ENCODE measurements at regions of chr4 and their contacts with region 1.

Region 1: DNA sequence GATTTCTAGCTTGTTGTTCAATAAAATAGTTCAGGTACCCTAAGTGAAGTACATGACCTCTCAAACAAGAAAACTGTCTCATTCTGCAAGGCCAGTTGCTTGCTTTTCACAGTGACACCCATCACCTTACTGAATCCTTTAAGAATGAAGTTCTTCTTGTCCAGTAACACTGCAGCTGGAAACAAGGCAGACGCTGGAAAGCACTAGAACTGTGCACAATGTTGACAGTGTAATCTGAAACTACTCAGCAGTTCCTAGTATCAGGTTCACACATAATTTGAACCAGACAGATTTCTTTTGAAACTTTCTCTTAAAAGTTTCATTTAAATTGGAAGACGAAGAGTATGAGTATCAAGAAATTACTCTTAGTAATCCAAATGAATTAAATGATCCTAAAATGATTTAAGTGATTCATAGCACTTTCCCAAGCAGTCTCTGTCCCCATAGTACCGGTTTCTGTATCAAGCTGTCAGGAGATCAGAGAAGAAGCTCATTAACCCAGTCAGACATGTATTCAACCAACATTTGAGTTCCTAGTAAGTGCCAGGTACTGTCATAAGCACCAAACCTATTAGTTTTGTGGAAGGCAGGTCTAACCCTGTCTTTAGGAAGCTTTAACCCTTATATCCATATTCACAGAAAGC is 63.5 kb downstream of the PALLD start:
- DNase-seq: peak; percentile 58 to 86
- H3K4me3 ChIP-seq: no peak overlapping the region
- H3K27ac ChIP-seq: peak overlapping the region; percentile 80
- H3K4me1 ChIP-seq: peaks cover 47% of the 10 kb centered on the region
- H3K27me3 ChIP-seq: no peaks in the 10 kb centered on the region
- CTCF ChIP-seq: no peak

Region 2: DNA sequence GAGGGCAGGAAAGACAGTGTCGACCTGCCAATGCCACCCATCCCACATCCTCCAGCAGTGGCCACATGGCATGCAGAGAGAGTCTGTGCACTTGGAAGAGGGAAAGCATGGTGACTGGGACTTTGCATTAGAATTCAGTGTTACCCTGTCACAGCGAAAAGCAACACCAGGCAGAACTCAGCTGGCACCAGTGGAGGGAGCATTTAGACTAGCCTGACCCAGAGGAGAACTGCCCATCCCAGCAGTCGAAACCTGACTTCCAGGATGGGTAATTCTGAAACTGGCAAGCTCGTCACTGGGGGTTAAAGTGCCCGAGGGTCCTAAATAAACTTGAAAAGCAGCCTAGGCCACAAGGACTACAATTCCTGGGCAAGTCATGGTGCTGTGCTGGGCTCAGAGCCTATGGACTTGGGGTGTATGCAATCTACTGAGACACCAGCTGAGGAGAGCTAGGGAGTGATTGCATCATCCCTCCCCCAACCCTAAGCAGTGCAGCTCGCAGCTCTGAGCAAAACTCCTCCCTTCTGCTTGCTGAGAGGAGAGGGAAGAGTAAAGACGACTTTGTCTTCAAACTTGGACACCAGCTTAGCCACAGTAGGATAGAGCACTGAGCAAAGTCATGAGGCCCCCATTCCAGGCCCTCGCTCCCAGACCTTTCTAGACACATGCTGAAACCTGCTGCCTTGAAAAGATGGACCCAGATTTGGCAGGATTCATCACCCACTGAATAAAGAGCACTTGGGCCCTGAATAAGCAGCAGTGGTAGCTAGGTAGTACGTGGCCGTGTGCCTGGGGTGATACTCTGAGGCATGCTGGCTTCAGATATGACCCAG is 148.8 kb before region 1 on chr4:
- CTCF ChIA-PET with region 1: no interaction called
- POLR2A ChIA-PET with region 1: no interaction called
- intact Hi-C with region 1: no loop called
- DNase-seq: no peak
- H3K4me3 ChIP-seq: no peak overlapping the region
- H3K27ac ChIP-seq: no peak overlapping the region
- H3K4me1 ChIP-seq: 0 out of 2 replicates have a peak, but pooled peaks cover 7% of the 10 kb centered on the region
- H3K27me3 ChIP-seq: no peaks in the 10 kb centered on the region
- CTCF ChIP-seq: no peak

Region 3: GRCh38 chr4:168421671-168422070 is 138.6 kb before region 1 on chr4:
- CTCF ChIA-PET with region 1: no interaction called
- POLR2A ChIA-PET with region 1: no interaction called
- intact Hi-C with region 1: no loop called
- DNase-seq: peak; percentile 44 to 52
- H3K4me3 ChIP-seq: no peak overlapping the region
- H3K27ac ChIP-seq: no peak overlapping the region
- H3K4me1 ChIP-seq: peaks cover 14% of the 10 kb centered on the region
- H3K27me3 ChIP-seq: no peaks in the 10 kb centered on the region
- CTCF ChIP-seq: no peak

Region 4: DNA sequence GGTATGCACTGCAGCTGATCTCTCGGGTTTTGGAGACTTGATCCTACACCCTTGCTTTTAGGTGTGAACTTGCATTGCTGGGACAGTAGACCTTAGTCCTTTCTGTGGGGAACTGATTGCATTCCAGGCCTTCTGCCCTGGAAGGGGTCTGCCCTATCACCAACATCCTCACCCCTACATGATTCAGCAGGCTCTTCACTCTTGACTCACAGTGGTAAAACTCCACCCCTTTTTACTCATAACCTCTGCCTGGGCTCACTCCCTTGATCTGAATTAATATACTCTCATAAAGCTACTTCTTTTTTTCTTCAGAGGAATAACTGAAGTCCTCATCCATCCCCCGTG is 73.4 kb before region 1 on chr4:
- CTCF ChIA-PET with region 1: no interaction called
- POLR2A ChIA-PET with region 1: interaction called, 7 read pairs
- intact Hi-C with region 1: loop called (anchors 2 kb)
- DNase-seq: peak in 1 of 2 experiments; percentile 78
- H3K4me3 ChIP-seq: peak overlapping the region; percentile 23; the same call in 1 of the 2 replicates
- H3K27ac ChIP-seq: peak overlapping the region; percentile 92
- H3K4me1 ChIP-seq: peaks cover 55% of the 10 kb centered on the region
- H3K27me3 ChIP-seq: no peaks in the 10 kb centered on the region
- CTCF ChIP-seq: no peak

Region 5: GRCh38 chr4:168514249-168514852 is 46.0 kb before region 1 on chr4:
- CTCF ChIA-PET with region 1: no interaction called
- POLR2A ChIA-PET with region 1: interaction called, 3 read pairs
- intact Hi-C with region 1: loop called (anchors 1 kb)
- DNase-seq: peak in 1 of 2 experiments; percentile 43
- H3K4me3 ChIP-seq: no peak overlapping the region
- H3K27ac ChIP-seq: no peak overlapping the region
- H3K4me1 ChIP-seq: no peaks in the 10 kb centered on the region
- H3K27me3 ChIP-seq: no peaks in the 10 kb centered on the region
- CTCF ChIP-seq: peak; percentile 67

Region 6: GRCh38 chr4:168540086-168540865 is 20.0 kb before region 1 on chr4:
- CTCF ChIA-PET with region 1: no interaction called
- POLR2A ChIA-PET with region 1: interaction called, 4 read pairs
- intact Hi-C with region 1: loop called (anchors 2 kb)
- DNase-seq: no peak
- H3K4me3 ChIP-seq: no peak overlapping the region
- H3K27ac ChIP-seq: no peak overlapping the region
- H3K4me1 ChIP-seq: peaks cover 14% of the 10 kb centered on the region; the same call in 1 of the 2 replicates
- H3K27me3 ChIP-seq: no peaks in the 10 kb centered on the region
- CTCF ChIP-seq: no peak

Region 7: DNA sequence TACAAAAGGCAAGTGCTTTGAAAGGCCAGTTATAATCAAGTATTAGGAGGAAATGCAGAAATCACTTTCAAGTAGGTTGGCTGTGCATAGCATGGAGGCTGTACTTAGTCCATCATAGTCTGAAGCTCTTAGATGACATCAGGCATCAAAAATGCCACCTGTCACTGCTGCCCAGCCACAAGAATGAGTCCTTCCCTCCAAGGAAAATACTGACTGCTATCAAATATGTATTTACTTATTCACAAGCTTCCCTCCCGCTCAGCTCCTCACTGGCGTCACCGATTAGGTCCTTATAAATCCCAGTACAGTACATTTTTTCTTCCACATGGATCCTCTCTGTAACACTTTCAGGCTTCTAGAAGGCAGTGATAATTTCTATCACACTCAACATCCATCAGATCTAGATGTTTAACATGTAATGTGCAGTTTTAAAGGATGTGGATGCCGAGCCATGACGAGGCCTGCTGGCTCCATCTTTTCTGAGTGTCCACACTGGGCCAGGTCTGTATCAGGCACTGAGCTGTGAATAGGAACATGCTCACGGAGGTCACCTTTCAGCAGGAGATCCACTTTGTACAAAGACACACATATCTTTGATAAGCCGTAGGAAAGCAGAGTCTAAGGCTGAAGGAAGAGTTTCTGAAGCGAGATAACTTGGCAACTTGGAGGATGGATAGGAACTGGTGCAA is 58.4 kb after region 1 on chr4:
- CTCF ChIA-PET with region 1: no interaction called
- POLR2A ChIA-PET with region 1: interaction called, 3 read pairs
- intact Hi-C with region 1: loop called (anchors 5 kb)
- DNase-seq: peak; percentile 64 to 82
- H3K4me3 ChIP-seq: no peak overlapping the region
- H3K27ac ChIP-seq: peak overlapping the region; percentile 55
- H3K4me1 ChIP-seq: peaks cover 18% of the 10 kb centered on the region
- H3K27me3 ChIP-seq: no peaks in the 10 kb centered on the region
- CTCF ChIP-seq: no peak

Region 8: GRCh38 chr4:168631241-168632162 is 71.2 kb after region 1 on chr4:
- CTCF ChIA-PET with region 1: no interaction called
- POLR2A ChIA-PET with region 1: no interaction called
- intact Hi-C with region 1: loop called (anchors 1 kb)
- DNase-seq: peak; percentile 66 to 78
- H3K4me3 ChIP-seq: peak overlapping the region; percentile 92
- H3K27ac ChIP-seq: peak overlapping the region; percentile 75
- H3K4me1 ChIP-seq: peaks cover 57% of the 10 kb centered on the region
- H3K27me3 ChIP-seq: no peaks in the 10 kb centered on the region
- CTCF ChIP-seq: no peak; the same call in 1 of the 2 replicates

Region 9: DNA sequence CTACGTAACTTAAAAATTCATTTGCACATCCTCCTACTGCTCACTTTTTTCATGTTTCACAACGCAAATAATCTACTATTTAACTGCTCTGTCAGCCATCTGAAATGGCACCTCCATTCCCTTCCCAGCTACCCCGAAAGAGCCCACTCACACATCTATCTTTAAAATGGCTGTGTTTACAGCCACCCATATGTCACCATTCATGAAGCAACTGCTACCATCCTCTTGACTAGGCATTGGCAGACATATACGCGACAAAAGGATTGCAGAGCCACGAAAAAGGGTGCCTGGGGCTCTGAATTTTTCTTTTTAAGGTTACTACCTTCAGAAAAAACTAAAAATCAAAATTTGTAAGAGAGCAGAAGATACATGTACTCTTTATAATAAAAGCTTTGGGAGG is 699.0 kb after region 1 on chr4:
- CTCF ChIA-PET with region 1: no interaction called
- POLR2A ChIA-PET with region 1: interaction called, 11 read pairs
- intact Hi-C with region 1: no loop called
- DNase-seq: no peak
- H3K4me3 ChIP-seq: no peak overlapping the region
- H3K27ac ChIP-seq: no peak overlapping the region
- H3K4me1 ChIP-seq: peaks cover 8% of the 10 kb centered on the region
- H3K27me3 ChIP-seq: no peaks in the 10 kb centered on the region
- CTCF ChIP-seq: no peak